KBM-7 (cell line): ENCODE measurements at regions of chr2 and their contacts with region 1.

Region 1: DNA sequence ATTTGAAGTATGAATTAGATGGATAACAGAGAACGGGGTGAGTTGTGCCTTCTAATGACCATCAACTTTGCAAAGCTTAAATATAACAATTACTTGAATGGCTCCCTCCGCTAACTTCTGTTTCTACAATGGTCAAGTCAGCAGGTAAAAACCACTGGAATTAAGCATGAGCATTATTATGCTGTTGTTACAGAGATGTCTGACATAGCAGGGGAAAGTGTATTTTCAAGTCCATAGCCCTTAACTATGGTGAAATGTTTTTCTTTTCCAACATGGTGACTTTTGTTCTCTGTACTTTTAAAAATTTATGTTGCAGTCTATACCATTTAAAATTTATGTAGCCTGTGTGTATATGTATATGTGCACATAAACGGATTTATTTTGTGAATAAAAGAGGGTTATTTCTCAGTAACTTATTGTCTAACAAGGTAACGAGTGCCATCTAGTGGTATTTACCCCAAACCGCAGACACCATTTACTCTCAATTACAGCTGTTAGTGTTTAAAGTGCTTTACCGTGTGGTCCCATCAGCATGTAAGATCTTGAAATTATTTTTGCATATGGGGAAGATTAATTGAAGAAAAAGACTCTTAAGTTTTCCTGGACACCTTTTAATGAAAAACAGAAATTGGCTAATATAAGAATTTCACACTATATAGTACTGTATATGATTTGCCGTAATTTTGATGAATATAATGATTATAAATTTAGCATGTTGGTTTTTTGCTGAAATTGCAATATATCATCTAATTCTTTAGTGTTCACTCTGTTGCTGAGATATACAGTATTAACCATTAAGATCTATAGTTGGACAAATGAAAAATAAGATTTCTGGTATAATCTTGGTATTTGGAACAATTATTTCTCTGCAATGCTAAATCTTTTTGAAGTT is 78.2 kb downstream of the UBE2E3 start:
- DNase-seq: peak; percentile 67

Region 2: DNA sequence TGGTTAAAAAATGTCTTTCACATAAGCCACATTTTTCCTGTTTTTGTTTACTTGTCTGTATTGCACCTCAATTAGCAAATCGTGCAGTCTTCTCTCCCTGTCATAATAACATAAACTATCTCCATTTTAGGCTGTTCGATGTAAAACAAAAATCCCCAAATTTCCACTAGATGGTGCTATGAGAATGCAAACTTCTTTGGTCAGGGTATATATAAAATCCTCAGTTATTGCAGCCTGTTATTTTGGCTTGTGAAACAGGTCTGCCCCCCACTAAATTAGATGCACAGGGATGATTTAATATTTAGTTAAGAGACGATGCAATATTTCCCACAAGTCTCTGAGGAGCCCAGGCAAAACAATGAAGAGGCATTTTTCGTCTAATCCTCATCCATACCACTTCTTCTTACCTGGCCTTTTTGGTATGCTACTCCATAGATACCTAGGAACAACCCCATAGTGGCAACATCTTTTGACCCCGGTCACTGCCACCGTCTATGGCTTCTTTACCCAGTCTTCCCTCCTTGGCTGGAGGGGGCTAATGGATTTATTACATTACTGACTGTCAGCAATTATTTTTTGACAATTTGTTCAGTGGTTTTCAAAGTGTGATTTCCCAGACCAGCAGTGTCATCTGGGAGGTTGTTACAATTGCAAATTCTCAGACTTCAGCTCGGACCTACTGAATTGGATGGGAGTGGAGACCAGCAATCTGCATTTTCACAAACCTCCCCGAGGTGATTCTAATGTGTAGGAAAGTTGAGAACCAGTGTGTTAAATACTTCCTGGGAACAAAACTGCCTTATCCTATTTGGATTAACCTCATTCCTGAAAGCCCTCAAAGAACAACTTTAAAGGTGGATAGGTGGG is 934.1 kb before region 1 on chr2:
- in situ Hi-C with region 1: loop called (anchors 25 kb)
- DNase-seq: peak; percentile 80